ENCODE measurements at regions of chr17 and their contacts with region 1.

Region 1: GRCh38 chr17:57084802-57085447 is at the start of gene AKAP1:
- DNase-seq: peak; percentile 99
- ATAC-seq: peak; percentile 92
- H3K4me3 Mint-ChIP-seq: peak within 1 kb of the TSS; percentile 90
- H3K27ac Mint-ChIP-seq: peak within 1 kb of the TSS; percentile 91
- H3K4me1 Mint-ChIP-seq: peaks cover 24% of the 10 kb centered on the region
- H3K27me3 Mint-ChIP-seq: no peaks in the 10 kb centered on the region
- total RNA-seq, gene AKAP1: 21.4 to 23.8 TPM

Region 2: DNA sequence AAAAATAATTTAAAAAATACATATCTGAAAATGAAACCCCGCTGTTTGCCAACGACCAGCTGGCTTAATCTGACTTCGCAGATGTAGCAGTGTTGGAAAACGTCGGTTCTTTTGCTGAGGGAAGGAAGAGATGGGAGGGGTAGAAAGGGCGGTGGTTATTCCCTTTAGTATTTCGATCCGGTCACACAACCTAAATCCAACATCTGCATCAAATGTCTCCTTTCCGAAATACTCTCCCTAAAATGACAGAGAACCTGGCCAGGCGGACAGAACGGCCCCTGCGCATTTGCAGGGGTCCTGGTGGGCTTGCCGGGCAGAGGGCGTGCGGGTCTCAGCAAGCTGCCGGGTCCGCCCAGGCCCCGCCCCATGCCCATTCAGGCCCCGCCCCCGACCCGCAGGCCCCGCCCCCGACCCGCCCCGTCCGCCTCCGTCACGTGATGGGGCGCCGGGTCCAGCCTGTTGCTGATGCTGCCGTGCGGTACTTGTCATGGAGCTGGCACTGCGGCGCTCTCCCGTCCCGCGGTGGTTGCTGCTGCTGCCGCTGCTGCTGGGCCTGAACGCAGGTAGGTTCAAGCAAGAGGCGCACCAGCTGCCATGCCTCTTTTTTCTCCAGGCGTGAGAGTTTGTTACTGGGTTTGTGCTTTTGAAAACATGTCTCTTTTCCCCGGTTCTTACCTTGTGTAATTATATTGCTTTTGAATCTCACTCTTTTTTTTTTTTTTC is 107.1 kb before region 1 on chr17 and contains the start of gene SCPEP1:
- POLR2A ChIA-PET with region 1: interaction called, 13 read pairs
- DNase-seq: peak; percentile 81
- ATAC-seq: peak; percentile 94
- H3K4me3 Mint-ChIP-seq: peak within 1 kb of the TSS; percentile 83
- H3K27ac Mint-ChIP-seq: peak within 1 kb of the TSS; percentile 82
- H3K4me1 Mint-ChIP-seq: peaks cover 19% of the 10 kb centered on the region
- H3K27me3 Mint-ChIP-seq: peaks cover 26% of the 10 kb centered on the region
- total RNA-seq, gene SCPEP1: 15.8 to 16.6 TPM

Region 3: GRCh38 chr17:57114085-57114673 is 29.3 kb after region 1 on chr17:
- POLR2A ChIA-PET with region 1: no interaction called
- DNase-seq: peak; percentile 69
- ATAC-seq: peak; percentile 52
- H3K4me3 Mint-ChIP-seq: no peak overlapping the region
- H3K27ac Mint-ChIP-seq: no peak overlapping the region
- H3K4me1 Mint-ChIP-seq: peaks cover 1% of the 10 kb centered on the region
- H3K27me3 Mint-ChIP-seq: no peaks in the 10 kb centered on the region

Measured in activated naive CD8-positive, alpha-beta T cell treated with anti-CD3 and anti-CD28 coated beads, Interleukin-2, amount 10 ng/mL, durations not matched to agents 7 days and 5 days (primary cell).